GM13976 (cell line): ENCODE measurements at regions of chr2 and their contacts with region 1.

Region 1: DNA sequence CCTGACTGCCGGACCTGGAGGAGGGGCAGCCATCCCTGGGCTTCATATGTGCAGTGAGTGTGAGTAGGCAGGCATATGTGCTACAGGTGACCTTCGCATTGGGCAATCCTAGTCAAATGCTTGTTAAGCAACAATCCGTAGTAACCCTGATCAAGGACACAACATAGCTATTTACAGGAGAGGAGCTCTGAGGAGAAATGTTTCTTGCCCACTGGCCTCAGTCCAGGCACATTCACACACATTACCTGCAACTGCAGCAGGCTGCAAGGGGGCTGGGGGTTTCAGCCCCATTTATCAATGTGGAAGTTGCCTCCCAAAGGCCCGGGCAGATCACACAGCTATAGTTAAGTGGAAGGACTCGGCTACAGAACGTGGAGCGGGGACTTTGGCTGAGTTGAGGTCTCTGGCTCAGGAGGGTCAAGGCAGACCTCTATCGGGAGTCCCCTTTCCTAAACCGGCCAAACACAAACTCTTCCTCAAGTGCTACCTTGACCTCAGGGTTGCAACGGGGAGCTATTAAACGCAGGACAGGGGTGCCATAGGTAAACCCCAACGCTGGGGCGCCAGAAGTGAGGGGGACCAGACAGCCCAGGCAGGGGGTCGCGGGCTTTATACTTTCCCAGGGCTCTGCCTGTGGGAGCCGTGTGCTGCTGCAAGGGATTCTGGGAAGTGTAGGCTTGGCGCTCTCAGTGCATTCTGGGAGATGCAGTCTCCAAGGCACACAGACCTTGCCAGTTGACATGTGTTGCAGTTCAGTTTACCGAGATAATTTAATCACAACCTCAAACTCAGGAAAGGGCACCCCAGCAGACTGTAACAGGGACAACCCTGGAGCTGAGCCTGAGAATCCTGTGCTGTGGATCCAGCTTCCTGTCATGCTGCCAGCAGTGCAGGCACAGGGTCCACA is 9.4 kb downstream of the KHK start:
- DNase-seq: peak; percentile 86
- CTCF ChIP-seq: no peak

Region 2: GRCh38 chr2:26164231-26164630 is 931.8 kb before region 1 on chr2:
- in situ Hi-C with region 1: no loop called
- DNase-seq: no peak
- CTCF ChIP-seq: no peak

Region 3: DNA sequence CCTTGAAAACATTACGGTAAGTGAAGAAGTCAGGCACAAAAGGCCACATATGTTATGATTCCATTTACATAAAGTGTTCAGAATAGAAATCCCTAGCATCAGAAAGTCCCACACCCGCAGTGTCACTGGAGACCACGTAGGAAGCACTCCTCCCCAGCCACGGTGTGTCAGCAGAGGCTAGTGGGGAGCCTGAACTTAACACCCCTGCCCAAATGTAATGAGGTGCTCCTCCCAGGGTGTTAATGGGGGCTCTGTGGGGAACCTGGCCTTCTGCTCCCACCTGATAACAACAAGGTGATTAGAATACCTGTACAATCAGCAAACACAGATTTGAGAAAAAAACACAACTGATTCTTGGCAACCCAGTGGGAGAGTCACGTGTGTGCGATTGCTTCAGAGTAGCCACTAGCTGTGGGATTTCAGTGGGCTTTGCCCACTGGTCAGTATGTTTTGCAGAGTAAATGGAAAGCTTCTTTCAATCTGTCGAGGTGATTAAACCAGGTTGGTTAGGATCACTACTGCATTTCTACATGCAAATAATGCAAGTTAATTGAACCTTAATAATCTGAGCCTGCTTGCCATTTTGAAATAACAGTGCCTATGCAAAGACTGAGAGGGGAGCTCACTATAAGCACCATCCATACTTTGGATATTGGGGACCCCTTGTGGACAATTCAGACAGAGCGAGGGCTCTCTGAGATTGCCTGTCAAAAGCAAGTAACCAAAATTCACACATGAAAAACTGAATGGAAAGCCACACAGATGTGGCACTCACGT is 95.2 kb after region 1 on chr2:
- in situ Hi-C with region 1: loop called (anchors 10 kb)
- DNase-seq: peak; percentile 75
- CTCF ChIP-seq: peak; percentile 70